ENCODE measurements at regions of chr2 and their contacts with region 1.

Region 1: GRCh38 chr2:174593574-174594203 is 3.9 kb downstream of the WIPF1 start:
- DNase-seq: peak; percentile 33 to 91 (median 74)
- ATAC-seq: peak; percentile 79 to 86 (median 82)
- H3K4me3 ChIP-seq: peak overlapping the region; percentile 35 to 58
- H3K4me3 Mint-ChIP-seq: peak overlapping the region; percentile 88 to 99 (median 95)
- H3K27ac ChIP-seq: peak overlapping the region; percentile 89
- H3K27ac Mint-ChIP-seq: peak overlapping the region; percentile 98 to 99
- H3K4me1 ChIP-seq: peaks cover 44 to 56% of the 10 kb centered on the region in 2 experiments
- H3K4me1 Mint-ChIP-seq: peaks cover 52 to 82% (median 63%) of the 10 kb centered on the region in 3 donors
- H3K27me3 ChIP-seq: no peaks in the 10 kb centered on the region
- H3K27me3 Mint-ChIP-seq: no peaks in the 10 kb centered on the region

Region 2: DNA sequence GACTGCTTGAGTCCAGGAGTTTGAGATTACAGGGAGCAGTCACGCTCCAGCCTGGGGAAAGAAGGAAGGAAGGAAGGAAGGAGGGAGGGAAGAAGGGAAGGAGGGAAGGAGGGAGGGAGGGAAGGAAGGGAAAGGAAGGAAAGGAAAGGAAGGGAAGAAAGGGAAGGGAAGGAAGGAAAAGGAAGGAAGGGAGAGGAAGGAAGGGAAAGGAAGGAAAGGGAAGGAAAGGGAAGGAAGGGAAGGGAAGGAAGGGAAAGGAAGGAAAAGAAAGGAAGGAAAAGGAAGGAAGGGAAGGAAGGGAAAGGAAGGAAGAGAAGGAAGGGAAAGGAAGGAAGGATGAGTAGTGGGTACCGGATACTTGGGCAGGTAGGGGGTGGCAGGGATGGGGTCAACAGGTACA is 139.1 kb before region 1 on chr2:
- CTCF ChIA-PET with region 1: no interaction called
- POLR2A ChIA-PET with region 1: no interaction called
- DNase-seq: no peak
- ATAC-seq: no peak
- H3K4me3 ChIP-seq: no peak overlapping the region
- H3K4me3 Mint-ChIP-seq: no peak overlapping the region
- H3K27ac ChIP-seq: no peak overlapping the region
- H3K27ac Mint-ChIP-seq: peak overlapping the region in 1 of 2 donors; percentile 48
- H3K4me1 ChIP-seq: peaks cover 0 to 5% of the 10 kb centered on the region in 2 experiments
- H3K4me1 Mint-ChIP-seq: peaks cover 7 to 9% (median 8%) of the 10 kb centered on the region in 3 donors
- H3K27me3 ChIP-seq: no peaks in the 10 kb centered on the region
- H3K27me3 Mint-ChIP-seq: no peaks in the 10 kb centered on the region

Region 3: GRCh38 chr2:174487108-174487819 is 106.4 kb before region 1 on chr2:
- CTCF ChIA-PET with region 1: interaction called in 1 of 2 experiments, 5 read pairs
- POLR2A ChIA-PET with region 1: interaction called in 1 of 2 experiments, 11 read pairs
- DNase-seq: peak; percentile 72 to 99 (median 86)
- ATAC-seq: peak; percentile 82 to 87 (median 85)
- H3K4me3 ChIP-seq: peak overlapping the region; percentile 65 to 88
- H3K4me3 Mint-ChIP-seq: peak overlapping the region; percentile 91 to 98 (median 94)
- H3K27ac ChIP-seq: peak overlapping the region; percentile 76
- H3K27ac Mint-ChIP-seq: peak overlapping the region; percentile 92 to 95
- H3K4me1 ChIP-seq: peaks cover 34 to 39% of the 10 kb centered on the region in 2 experiments
- H3K4me1 Mint-ChIP-seq: peaks cover 66 to 76% (median 72%) of the 10 kb centered on the region in 3 donors
- H3K27me3 ChIP-seq: no peaks in the 10 kb centered on the region
- H3K27me3 Mint-ChIP-seq: no peaks in the 10 kb centered on the region

Region 4: DNA sequence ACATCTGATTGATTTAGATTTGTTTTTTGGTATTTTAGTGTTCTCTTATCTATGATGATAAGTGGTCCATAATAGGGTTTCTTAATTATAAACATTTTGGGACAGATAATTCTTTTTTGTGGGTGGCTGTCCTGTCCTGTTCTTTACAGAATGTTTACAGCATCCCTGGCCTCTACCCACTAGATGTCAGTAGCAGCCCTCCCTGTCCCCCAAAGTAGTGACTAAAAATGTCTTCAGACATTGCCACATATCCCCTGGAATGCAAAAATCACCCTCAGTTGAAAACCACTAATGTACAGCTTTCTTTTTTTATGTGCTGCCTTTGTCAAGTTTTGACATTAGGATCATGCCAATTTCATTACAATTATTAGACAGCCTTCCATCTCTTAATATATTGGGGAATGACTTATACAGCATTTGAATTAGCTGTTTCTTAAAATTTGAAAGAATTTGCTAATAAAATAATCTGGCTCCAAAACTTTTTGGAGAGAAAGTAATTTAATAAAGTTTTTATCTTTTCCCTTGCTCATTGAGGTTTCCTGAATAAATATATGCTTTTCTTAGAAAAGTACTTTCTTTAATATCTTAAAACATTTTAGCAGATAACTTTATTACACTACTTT is 15.6 kb before region 1 on chr2:
- CTCF ChIA-PET with region 1: interaction called, 8 to 298 read pairs
- POLR2A ChIA-PET with region 1: interaction called, 3 to 13 read pairs
- DNase-seq: peak in 34 of 35 experiments; percentile 35 to 82 (median 62)
- ATAC-seq: peak; percentile 67 to 78 (median 73)
- H3K4me3 ChIP-seq: no peak overlapping the region
- H3K4me3 Mint-ChIP-seq: no peak overlapping the region
- H3K27ac ChIP-seq: peak overlapping the region; percentile 16
- H3K27ac Mint-ChIP-seq: peak overlapping the region; percentile 59 to 68
- H3K4me1 ChIP-seq: peaks cover 3 to 48% of the 10 kb centered on the region in 2 experiments
- H3K4me1 Mint-ChIP-seq: peaks cover 76 to 83% (median 83%) of the 10 kb centered on the region in 3 donors
- H3K27me3 ChIP-seq: no peaks in the 10 kb centered on the region
- H3K27me3 Mint-ChIP-seq: no peaks in the 10 kb centered on the region

Region 5: GRCh38 chr2:174615871-174616436 is 22.3 kb after region 1 on chr2:
- CTCF ChIA-PET with region 1: interaction called, 5 to 6 read pairs
- POLR2A ChIA-PET with region 1: interaction called, 3 to 12 read pairs
- DNase-seq: peak in 1 of 35 experiments; percentile 44
- ATAC-seq: peak; percentile 59 to 85 (median 68)
- H3K4me3 ChIP-seq: no peak overlapping the region
- H3K4me3 Mint-ChIP-seq: peak overlapping the region in 2 of 3 donors; percentile 29 to 49
- H3K27ac ChIP-seq: peak overlapping the region; percentile 62
- H3K27ac Mint-ChIP-seq: peak overlapping the region; percentile 81 to 89
- H3K4me1 ChIP-seq: peaks cover 40 to 54% of the 10 kb centered on the region in 2 experiments
- H3K4me1 Mint-ChIP-seq: peaks cover 88 to 91% (median 88%) of the 10 kb centered on the region in 3 donors
- H3K27me3 ChIP-seq: no peaks in the 10 kb centered on the region
- H3K27me3 Mint-ChIP-seq: no peaks in the 10 kb centered on the region

Region 6: GRCh38 chr2:174662459-174662858 is 68.8 kb after region 1 on chr2:
- CTCF ChIA-PET with region 1: no interaction called
- POLR2A ChIA-PET with region 1: interaction called in 1 of 2 experiments, 17 read pairs
- DNase-seq: no peak
- ATAC-seq: no peak
- H3K4me3 ChIP-seq: no peak overlapping the region
- H3K4me3 Mint-ChIP-seq: no peak overlapping the region
- H3K27ac ChIP-seq: no peak overlapping the region
- H3K27ac Mint-ChIP-seq: no peak overlapping the region
- H3K4me1 ChIP-seq: peaks cover 0 to 4% of the 10 kb centered on the region in 2 experiments
- H3K4me1 Mint-ChIP-seq: peaks cover 28 to 49% (median 35%) of the 10 kb centered on the region in 3 donors
- H3K27me3 ChIP-seq: no peaks in the 10 kb centered on the region
- H3K27me3 Mint-ChIP-seq: no peaks in the 10 kb centered on the region